ENCODE measurements at regions of chr4 and their contacts with region 1.

Region 1: DNA sequence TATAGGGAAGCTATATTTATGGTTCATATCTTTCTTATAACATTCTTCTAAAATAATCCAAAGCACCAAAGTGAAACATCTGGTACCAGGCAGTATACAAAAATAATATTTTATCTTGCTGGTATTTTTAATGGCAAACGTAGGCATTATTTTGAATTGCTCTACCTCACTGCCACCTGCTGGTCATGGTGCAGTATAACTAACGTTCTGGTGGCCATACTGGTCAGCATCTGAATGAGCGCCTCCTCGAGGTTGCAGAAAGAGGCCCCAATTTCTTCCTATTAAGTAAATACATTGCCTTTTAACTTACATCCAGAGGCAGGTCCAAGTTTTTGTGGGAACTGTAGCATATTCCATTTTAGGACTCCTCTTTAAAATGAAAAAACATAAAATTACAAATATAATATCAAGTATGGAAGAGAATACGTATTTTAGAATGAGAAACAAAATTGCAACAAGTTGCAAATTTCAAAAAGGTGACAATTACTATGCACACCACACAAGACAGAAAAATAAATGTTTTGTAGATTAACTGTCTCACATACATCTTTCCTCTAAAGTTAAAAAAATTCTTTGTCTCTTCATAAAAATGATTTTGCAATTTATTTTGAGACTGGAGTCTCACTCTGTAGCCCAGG is 22.9 kb upstream of the CWH43 start:
- DNase-seq: peak; percentile 63 to 67
- H3K4me3 ChIP-seq: no peak overlapping the region
- H3K27ac ChIP-seq: no peak overlapping the region
- H3K4me1 ChIP-seq: peaks cover 21% of the 10 kb centered on the region
- H3K27me3 ChIP-seq: no peaks in the 10 kb centered on the region
- CTCF ChIP-seq: peak; percentile 97

Region 2: DNA sequence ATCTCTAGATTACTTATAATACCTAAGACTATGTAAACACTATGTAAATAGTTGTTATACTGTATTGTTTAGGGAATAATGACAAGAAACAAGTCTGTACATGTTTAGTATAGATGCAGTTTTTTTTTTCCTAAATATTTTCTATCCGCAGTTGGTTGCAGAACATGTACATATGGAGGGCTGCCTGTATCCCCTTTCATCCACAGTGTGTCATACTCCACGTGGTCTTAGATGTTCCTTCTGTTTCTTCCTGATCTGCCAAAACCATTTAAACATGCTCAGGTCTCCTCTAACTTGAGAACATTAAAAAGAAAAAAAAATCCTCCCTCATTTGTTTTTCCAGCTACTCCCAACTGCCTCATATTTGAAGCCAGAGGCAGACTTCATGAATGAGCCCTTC is 118.3 kb before region 1 on chr4:
- CTCF ChIA-PET with region 1: no interaction called
- POLR2A ChIA-PET with region 1: no interaction called
- intact Hi-C with region 1: loop called (anchors 5 kb)
- DNase-seq: no peak
- H3K4me3 ChIP-seq: no peak overlapping the region
- H3K27ac ChIP-seq: no peak overlapping the region
- H3K4me1 ChIP-seq: no peaks in the 10 kb centered on the region
- H3K27me3 ChIP-seq: no peaks in the 10 kb centered on the region
- CTCF ChIP-seq: no peak

Region 3: GRCh38 chr4:48944756-48945241 is 18.4 kb before region 1 on chr4:
- CTCF ChIA-PET with region 1: interaction called, 13 read pairs
- POLR2A ChIA-PET with region 1: interaction called, 4 read pairs
- intact Hi-C with region 1: loop called (anchors 2 kb)
- DNase-seq: peak in 1 of 2 experiments; percentile 28
- H3K4me3 ChIP-seq: peak overlapping the region; percentile 12; the same call in 1 of the 2 replicates
- H3K27ac ChIP-seq: peak overlapping the region; percentile 50
- H3K4me1 ChIP-seq: peaks cover 16% of the 10 kb centered on the region
- H3K27me3 ChIP-seq: no peaks in the 10 kb centered on the region
- CTCF ChIP-seq: peak; percentile 51

Region 4: GRCh38 chr4:48979914-48980579 is 16.9 kb after region 1 on chr4:
- CTCF ChIA-PET with region 1: no interaction called
- POLR2A ChIA-PET with region 1: no interaction called
- intact Hi-C with region 1: no loop called
- DNase-seq: no peak
- H3K4me3 ChIP-seq: no peak overlapping the region
- H3K27ac ChIP-seq: no peak overlapping the region
- H3K4me1 ChIP-seq: no peaks in the 10 kb centered on the region
- H3K27me3 ChIP-seq: peaks cover 14% of the 10 kb centered on the region
- CTCF ChIP-seq: no peak

Measured in PC-9 (cell line).